ENCODE measurements at regions of chr2 and their contacts with region 1.

Region 1: GRCh38 chr2:238970553-238971081 is 122.7 kb downstream of the TWIST2 start:
- DNase-seq: peak; percentile 88
- H3K4me3 ChIP-seq: peak overlapping the region in 1 of 2 experiments; percentile 35; a peak in 1 of 4 replicates
- H3K27ac ChIP-seq: no peak overlapping the region
- H3K4me1 ChIP-seq: peaks cover 0 to 7% of the 10 kb centered on the region in 2 experiments; a peak in 1 of 4 replicates
- H3K27me3 ChIP-seq: no peaks in the 10 kb centered on the region
- CTCF ChIP-seq: peak; percentile 89
- EP300 ChIP-seq: no peak
- RAD21 ChIP-seq: peak; percentile 68

Region 2: DNA sequence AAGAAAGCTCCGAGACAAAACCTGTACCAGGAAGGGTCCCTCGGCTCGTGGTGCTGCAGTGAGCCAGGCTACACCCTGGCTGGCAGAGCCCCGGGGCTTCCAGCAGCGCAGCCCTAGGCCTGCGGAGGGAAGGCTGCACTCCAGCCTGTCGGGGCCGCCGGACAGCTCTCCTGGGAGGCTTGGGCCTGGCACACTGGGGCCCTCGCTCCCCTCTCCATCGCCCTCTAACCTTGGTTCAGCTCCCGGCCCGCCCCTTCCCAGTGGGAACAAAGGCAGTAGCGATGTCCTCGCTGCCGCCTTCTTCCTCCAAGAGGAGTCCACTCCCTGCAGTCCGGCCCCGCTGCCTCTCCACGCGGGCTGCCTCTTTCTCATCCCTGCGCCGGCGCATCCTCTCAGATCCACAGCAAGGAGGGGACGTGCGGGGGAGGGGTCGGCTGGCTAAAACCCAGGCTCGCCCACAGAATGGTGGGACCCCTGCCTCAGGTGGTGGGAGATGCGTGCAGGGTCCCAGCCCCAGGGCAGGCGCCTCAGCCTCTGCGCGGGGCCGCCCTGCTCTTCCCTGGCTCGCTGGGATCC is 15.3 kb after region 1 on chr2:
- CTCF ChIA-PET with region 1: interaction called, 12 read pairs
- POLR2A ChIA-PET with region 1: no interaction called
- DNase-seq: peak; percentile 16
- H3K4me3 ChIP-seq: no peak overlapping the region
- H3K27ac ChIP-seq: no peak overlapping the region
- H3K4me1 ChIP-seq: no peaks in the 10 kb centered on the region
- H3K27me3 ChIP-seq: no peaks in the 10 kb centered on the region
- CTCF ChIP-seq: no peak
- EP300 ChIP-seq: no peak
- RAD21 ChIP-seq: no peak

Measured in SK-N-SH (cell line).